MCF 10A (cell line): ENCODE measurements at regions of chr9 and their contacts with region 1.

Region 1: DNA sequence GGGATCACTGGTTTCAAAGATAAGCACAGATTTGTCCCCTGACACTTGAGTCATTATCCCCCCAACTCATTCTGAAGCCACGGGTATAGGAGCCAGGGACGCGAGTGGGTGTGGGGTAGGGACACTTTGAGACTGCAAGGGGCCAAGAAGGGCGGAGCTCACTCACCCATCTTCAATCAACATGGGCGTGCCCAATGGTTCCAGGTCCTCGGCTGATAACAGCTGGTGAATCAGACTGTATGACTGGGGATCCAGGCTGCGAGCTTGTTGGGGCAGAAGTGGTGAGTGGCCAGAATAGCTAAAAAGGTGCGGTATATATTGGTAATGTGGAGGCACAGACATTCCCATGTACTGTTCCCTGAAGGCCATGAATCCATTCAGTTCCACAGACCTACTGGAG is 30.7 kb upstream of the NR5A1 start:
- DNase-seq: no peak
- H3K4me3 Mint-ChIP-seq: no peak overlapping the region
- H3K27ac Mint-ChIP-seq: no peak overlapping the region
- H3K4me1 Mint-ChIP-seq: no peaks in the 10 kb centered on the region
- H3K27me3 Mint-ChIP-seq: no peaks in the 10 kb centered on the region
- CTCF ChIP-seq: no peak

Region 2: DNA sequence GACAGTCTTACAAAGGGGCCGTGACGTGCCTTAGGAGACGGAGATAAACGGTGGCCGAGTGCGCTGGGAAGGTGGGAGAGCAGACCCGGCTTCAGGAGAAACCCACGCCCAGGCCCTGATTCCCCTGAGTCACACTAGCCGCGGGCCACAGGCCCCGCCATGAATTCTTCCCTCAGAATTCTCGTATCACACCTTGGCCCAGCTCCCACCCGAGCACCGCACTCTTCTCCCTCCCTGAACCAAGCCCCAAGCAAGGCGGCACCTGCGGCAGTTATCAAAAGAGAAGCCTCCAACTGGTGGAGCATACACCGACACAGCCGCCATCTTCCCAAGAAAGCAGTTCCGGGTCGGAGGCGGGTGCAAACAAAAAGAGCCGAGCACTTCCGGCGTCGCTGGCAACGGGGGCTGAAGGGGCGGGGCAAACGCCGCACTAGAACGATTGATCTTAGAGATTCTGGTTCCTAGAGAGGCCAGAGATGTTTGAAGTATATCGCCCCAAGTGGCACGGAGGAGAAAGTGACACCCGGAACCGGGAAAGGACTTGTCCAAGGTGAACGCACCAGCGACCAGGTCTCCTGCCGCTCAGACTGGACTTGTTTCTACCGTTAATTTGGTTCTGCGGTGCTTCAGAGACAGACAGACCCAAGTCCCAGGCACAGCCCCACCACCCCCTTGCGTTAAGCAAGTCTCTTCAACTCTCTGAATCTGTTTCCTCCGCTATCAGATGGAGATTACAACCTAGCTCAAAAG is 122.6 kb before region 1 on chr9 and contains the start of gene PSMB7:
- CTCF ChIA-PET with region 1: interaction called, 247 read pairs
- POLR2A ChIA-PET with region 1: interaction called, 6 read pairs
- intact Hi-C with region 1: loop called (anchors 1 kb)
- DNase-seq: peak; percentile 95
- H3K4me3 Mint-ChIP-seq: peak within 1 kb of the TSS; percentile 92
- H3K27ac Mint-ChIP-seq: peak within 1 kb of the TSS; percentile 96
- H3K4me1 Mint-ChIP-seq: peaks cover 21% of the 10 kb centered on the region
- H3K27me3 Mint-ChIP-seq: no peaks in the 10 kb centered on the region
- CTCF ChIP-seq: peak; percentile 87
- total RNA-seq, gene PSMB7: 264 and 352 TPM in 2 replicates

Region 3: GRCh38 chr9:124420991-124421543 is 116.9 kb before region 1 on chr9:
- CTCF ChIA-PET with region 1: interaction called, 247 read pairs
- POLR2A ChIA-PET with region 1: interaction called, 5 read pairs
- intact Hi-C with region 1: loop called (anchors 1 kb)
- DNase-seq: no peak
- H3K4me3 Mint-ChIP-seq: no peak overlapping the region
- H3K27ac Mint-ChIP-seq: no peak overlapping the region
- H3K4me1 Mint-ChIP-seq: no peaks in the 10 kb centered on the region
- H3K27me3 Mint-ChIP-seq: peaks cover 15% of the 10 kb centered on the region
- CTCF ChIP-seq: no peak

Region 4: GRCh38 chr9:124522121-124523098 is 15.5 kb before region 1 on chr9:
- CTCF ChIA-PET with region 1: interaction called, 30 read pairs
- POLR2A ChIA-PET with region 1: interaction called, 3 read pairs
- intact Hi-C with region 1: no loop called
- DNase-seq: no peak
- H3K4me3 Mint-ChIP-seq: no peak overlapping the region
- H3K27ac Mint-ChIP-seq: no peak overlapping the region
- H3K4me1 Mint-ChIP-seq: no peaks in the 10 kb centered on the region
- H3K27me3 Mint-ChIP-seq: no peaks in the 10 kb centered on the region
- CTCF ChIP-seq: no peak

Region 5: GRCh38 chr9:124527781-124528180 is 10.1 kb before region 1 on chr9:
- CTCF ChIA-PET with region 1: interaction called, 30 read pairs
- POLR2A ChIA-PET with region 1: interaction called, 3 read pairs
- intact Hi-C with region 1: no loop called
- DNase-seq: no peak
- H3K4me3 Mint-ChIP-seq: no peak overlapping the region
- H3K27ac Mint-ChIP-seq: no peak overlapping the region
- H3K4me1 Mint-ChIP-seq: no peaks in the 10 kb centered on the region
- H3K27me3 Mint-ChIP-seq: no peaks in the 10 kb centered on the region
- CTCF ChIP-seq: no peak

Region 6: DNA sequence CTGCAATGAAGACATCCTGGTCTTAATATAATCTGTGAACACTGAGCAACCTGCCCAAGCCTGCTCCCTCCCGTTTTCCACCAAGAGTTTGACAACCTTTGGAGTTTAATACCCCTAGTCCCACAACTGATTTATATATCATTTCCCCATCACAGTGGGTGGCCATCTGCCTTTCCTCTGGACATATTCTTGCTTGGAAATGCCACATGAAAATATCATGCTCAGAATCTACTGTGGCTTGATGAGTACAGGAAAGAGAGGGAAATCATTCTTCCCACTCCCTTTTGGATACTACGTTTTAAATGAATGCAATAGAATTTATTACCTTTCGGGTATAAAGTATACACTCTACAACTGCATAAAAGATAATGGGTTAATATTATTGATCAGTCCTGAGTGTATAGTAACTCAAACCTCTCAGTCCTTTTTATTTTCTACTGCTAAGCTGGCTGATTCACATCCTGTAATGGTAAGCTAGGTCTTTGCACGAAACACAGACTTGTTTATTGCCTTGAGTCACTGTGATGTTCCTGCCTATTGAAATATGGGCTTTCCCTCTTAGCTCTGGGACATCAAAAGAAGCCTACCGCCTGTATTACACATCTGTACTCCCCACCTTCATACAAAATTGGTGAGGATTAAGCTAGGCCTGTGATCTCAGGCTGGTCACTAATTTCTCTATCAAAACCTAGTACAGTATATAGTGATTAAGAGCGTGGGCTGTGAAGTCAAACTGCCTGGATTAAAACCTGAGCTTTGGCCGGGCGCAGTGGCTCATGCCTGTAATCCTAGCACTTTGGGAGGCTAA is 36.8 kb after region 1 on chr9:
- CTCF ChIA-PET with region 1: interaction called, 12 read pairs
- POLR2A ChIA-PET with region 1: no interaction called
- intact Hi-C with region 1: no loop called
- DNase-seq: peak; percentile 31
- H3K4me3 Mint-ChIP-seq: no peak overlapping the region
- H3K27ac Mint-ChIP-seq: no peak overlapping the region
- H3K4me1 Mint-ChIP-seq: peaks cover 5% of the 10 kb centered on the region
- H3K27me3 Mint-ChIP-seq: no peaks in the 10 kb centered on the region
- CTCF ChIP-seq: no peak